ENCODE measurements at regions of chr5 and their contacts with region 1.

Region 1: GRCh38 chr5:163408311-163408923 is 29.0 kb upstream of the CCNG1 start:
- DNase-seq: peak; percentile 57
- ATAC-seq: peak; percentile 86
- H3K4me3 Mint-ChIP-seq: peak overlapping the region; percentile 15; the same call in 1 of the 2 replicates
- H3K27ac Mint-ChIP-seq: no peak overlapping the region
- H3K4me1 Mint-ChIP-seq: peaks cover 11% of the 10 kb centered on the region
- H3K27me3 Mint-ChIP-seq: no peaks in the 10 kb centered on the region
- CTCF ChIP-seq: peak; percentile 87

Region 2: GRCh38 chr5:161966564-161966963 is 1441.9 kb before region 1 on chr5:
- CTCF ChIA-PET with region 1: interaction called, 11 read pairs
- POLR2A ChIA-PET with region 1: no interaction called
- DNase-seq: no peak
- ATAC-seq: peak; percentile 78
- H3K4me3 Mint-ChIP-seq: no peak overlapping the region
- H3K27ac Mint-ChIP-seq: no peak overlapping the region
- H3K4me1 Mint-ChIP-seq: peaks cover 6% of the 10 kb centered on the region; the same call in 1 of the 2 replicates
- H3K27me3 Mint-ChIP-seq: no peaks in the 10 kb centered on the region
- CTCF ChIP-seq: no peak

Region 3: GRCh38 chr5:162209005-162209605 is 1199.3 kb before region 1 on chr5:
- CTCF ChIA-PET with region 1: interaction called, 18 read pairs
- POLR2A ChIA-PET with region 1: no interaction called
- DNase-seq: peak; percentile 70
- ATAC-seq: peak; percentile 100
- H3K4me3 Mint-ChIP-seq: no peak overlapping the region
- H3K27ac Mint-ChIP-seq: no peak overlapping the region
- H3K4me1 Mint-ChIP-seq: no peaks in the 10 kb centered on the region
- H3K27me3 Mint-ChIP-seq: no peaks in the 10 kb centered on the region
- CTCF ChIP-seq: peak; percentile 34; the same call in 1 of the 2 replicates

Region 4: GRCh38 chr5:163079618-163080017 is 328.8 kb before region 1 on chr5:
- CTCF ChIA-PET with region 1: interaction called, 10 read pairs
- POLR2A ChIA-PET with region 1: no interaction called
- DNase-seq: peak; percentile 41
- ATAC-seq: no peak
- H3K4me3 Mint-ChIP-seq: no peak overlapping the region
- H3K27ac Mint-ChIP-seq: no peak overlapping the region
- H3K4me1 Mint-ChIP-seq: no peaks in the 10 kb centered on the region
- H3K27me3 Mint-ChIP-seq: no peaks in the 10 kb centered on the region
- CTCF ChIP-seq: peak; percentile 42

Region 5: GRCh38 chr5:163347671-163348070 is 60.7 kb before region 1 on chr5:
- CTCF ChIA-PET with region 1: interaction called, 53 read pairs
- POLR2A ChIA-PET with region 1: no interaction called
- DNase-seq: peak; percentile 72
- ATAC-seq: peak; percentile 78
- H3K4me3 Mint-ChIP-seq: no peak overlapping the region
- H3K27ac Mint-ChIP-seq: no peak overlapping the region
- H3K4me1 Mint-ChIP-seq: peaks cover 23% of the 10 kb centered on the region
- H3K27me3 Mint-ChIP-seq: no peaks in the 10 kb centered on the region
- CTCF ChIP-seq: peak; percentile 81

Region 6: DNA sequence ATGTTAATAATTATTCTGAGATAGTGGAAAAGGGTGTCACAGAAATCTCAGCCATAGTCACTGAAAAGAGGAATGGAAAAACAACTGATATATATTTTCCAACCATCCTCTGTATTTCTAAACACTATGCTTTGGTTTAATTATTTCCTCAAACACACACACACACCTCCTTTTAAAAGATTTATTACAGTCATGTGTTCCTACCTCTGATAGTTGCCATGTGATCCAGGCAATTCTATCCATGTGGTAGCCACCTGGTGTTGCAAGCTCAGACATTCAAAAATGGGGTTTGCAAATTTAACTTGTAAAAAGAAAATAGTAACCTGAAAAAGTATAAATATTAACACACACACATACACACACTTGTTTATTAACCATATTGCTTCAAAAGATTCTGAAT is 11.1 kb before region 1 on chr5:
- CTCF ChIA-PET with region 1: interaction called, 12 read pairs
- POLR2A ChIA-PET with region 1: no interaction called
- DNase-seq: no peak
- ATAC-seq: no peak
- H3K4me3 Mint-ChIP-seq: no peak overlapping the region
- H3K27ac Mint-ChIP-seq: no peak overlapping the region
- H3K4me1 Mint-ChIP-seq: no peaks in the 10 kb centered on the region
- H3K27me3 Mint-ChIP-seq: no peaks in the 10 kb centered on the region
- CTCF ChIP-seq: no peak

Region 7: GRCh38 chr5:163552536-163552935 is 144.1 kb after region 1 on chr5:
- CTCF ChIA-PET with region 1: no interaction called
- POLR2A ChIA-PET with region 1: no interaction called
- DNase-seq: no peak
- ATAC-seq: no peak
- H3K4me3 Mint-ChIP-seq: no peak overlapping the region
- H3K27ac Mint-ChIP-seq: no peak overlapping the region
- H3K4me1 Mint-ChIP-seq: peaks cover 12% of the 10 kb centered on the region
- H3K27me3 Mint-ChIP-seq: no peaks in the 10 kb centered on the region
- CTCF ChIP-seq: no peak

Measured in WTC11 (cell line).